Stomach (tissue), 19 donors: ENCODE measurements at regions of chr22 and their contacts with region 1.

Region 1: GRCh38 chr22:30634471-30635233 is 929 bp upstream of the SLC35E4 start:
- DNase-seq: peak; percentile 90 to 92
- H3K4me3 ChIP-seq: peak overlapping the region; percentile 59 to 70 (median 63)
- H3K27ac ChIP-seq: peak overlapping the region; percentile 81 to 96 (median 86)
- H3K4me1 ChIP-seq: peaks cover 26 to 43% (median 35%) of the 10 kb centered on the region in 4 donors
- H3K27me3 ChIP-seq: no peaks in the 10 kb centered on the region
- CTCF ChIP-seq: peak in 6 of 7 experiments; percentile 62 to 97 (median 96)
- EP300 ChIP-seq: no peak
- POLR2A ChIP-seq: no peak

Region 2: DNA sequence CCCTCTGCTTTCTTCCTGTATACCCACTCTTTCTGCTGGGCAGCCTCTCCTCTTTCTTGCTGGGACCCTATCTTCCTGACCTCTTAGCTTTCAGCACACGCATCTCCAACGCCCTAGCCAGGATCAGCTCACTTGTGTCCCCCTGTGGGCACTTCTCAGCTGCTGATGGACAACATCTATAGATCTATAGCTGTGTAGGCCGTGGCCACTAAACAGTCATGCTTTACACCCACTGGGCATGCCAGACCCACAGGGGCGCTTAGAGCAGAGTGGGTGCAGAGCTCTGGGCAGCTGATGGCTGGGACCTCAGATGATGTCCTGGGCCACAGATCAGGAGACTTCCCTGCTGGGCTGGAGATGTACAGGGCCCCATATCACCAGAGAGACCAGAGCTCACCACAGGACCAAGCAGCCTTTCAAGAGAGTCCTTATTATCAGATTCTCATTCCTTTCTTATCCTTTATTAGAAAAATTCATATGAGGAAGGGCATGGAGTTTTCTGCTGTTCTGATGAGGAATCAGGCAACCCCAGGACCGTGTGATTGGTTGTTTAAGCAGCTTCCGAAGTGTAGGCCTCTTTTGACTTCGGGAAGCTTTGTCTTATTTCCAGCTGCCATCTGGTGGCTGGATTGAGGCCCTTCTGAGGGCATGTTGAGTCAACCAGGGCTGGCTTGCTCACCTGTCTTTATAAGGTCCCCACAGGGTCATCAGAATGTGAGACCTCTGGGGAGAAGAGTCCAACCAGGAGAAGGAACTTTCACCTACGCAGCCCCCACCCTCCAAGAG is 120.5 kb after region 1 on chr22:
- intact Hi-C with region 1: loop called (anchors 5 kb)
- DNase-seq: peak; percentile 62 to 88
- H3K4me3 ChIP-seq: no peak overlapping the region
- H3K27ac ChIP-seq: no peak overlapping the region
- H3K4me1 ChIP-seq: no peaks in the 10 kb centered on the region
- H3K27me3 ChIP-seq: no peaks in the 10 kb centered on the region
- CTCF ChIP-seq: peak in 5 of 7 experiments; percentile 50 to 72 (median 68)
- EP300 ChIP-seq: no peak
- POLR2A ChIP-seq: no peak

Region 3: GRCh38 chr22:30920407-30920806 is 285.8 kb after region 1 on chr22:
- intact Hi-C with region 1: loop called (anchors 5 kb)
- DNase-seq: peak; percentile 79 to 90
- H3K4me3 ChIP-seq: no peak overlapping the region
- H3K27ac ChIP-seq: no peak overlapping the region
- H3K4me1 ChIP-seq: peaks cover 0 to 19% (median 12%) of the 10 kb centered on the region in 4 donors
- H3K27me3 ChIP-seq: no peaks in the 10 kb centered on the region
- CTCF ChIP-seq: peak in 5 of 7 experiments; percentile 78 to 92 (median 86)
- EP300 ChIP-seq: no peak
- POLR2A ChIP-seq: no peak